ENCODE measurements at regions of chr2 and their contacts with region 1.

Region 1: GRCh38 chr2:112726497-112727190 is 5.8 kb downstream of the NT5DC4 start:
- DNase-seq: peak; percentile 98

Region 2: GRCh38 chr2:112584134-112584890 is 142.3 kb before region 1 on chr2 and contains the start of gene CHCHD5:
- intact Hi-C with region 1: no loop called
- DNase-seq: peak; percentile 99
- total RNA-seq, gene CHCHD5: 12.7 to 23.8 TPM

Region 3: GRCh38 chr2:112626604-112627059 is 100.0 kb before region 1 on chr2:
- intact Hi-C with region 1: loop called (anchors 1 to 10 kb)
- DNase-seq: peak; percentile 90